ENCODE measurements at regions of chr21 and their contacts with region 1.

Region 1: GRCh38 chr21:41460578-41461527 is 34.8 kb downstream of the MX1 start:
- DNase-seq: peak; percentile 65
- H3K4me3 ChIP-seq: no peak overlapping the region
- H3K27ac ChIP-seq: no peak overlapping the region
- H3K4me1 ChIP-seq: no peaks in the 10 kb centered on the region
- H3K27me3 ChIP-seq: no peaks in the 10 kb centered on the region
- CTCF ChIP-seq: peak; percentile 71 to 81 (median 74)
- POLR2A ChIP-seq: no peak

Region 2: GRCh38 chr21:41283211-41283818 is 177.5 kb before region 1 on chr21:
- intact Hi-C with region 1: loop called (anchors 10 kb)
- DNase-seq: peak; percentile 39 to 49
- H3K4me3 ChIP-seq: no peak overlapping the region
- H3K27ac ChIP-seq: no peak overlapping the region
- H3K4me1 ChIP-seq: no peaks in the 10 kb centered on the region
- H3K27me3 ChIP-seq: no peaks in the 10 kb centered on the region
- CTCF ChIP-seq: peak; percentile 58 to 73 (median 70)
- POLR2A ChIP-seq: no peak

Region 3: DNA sequence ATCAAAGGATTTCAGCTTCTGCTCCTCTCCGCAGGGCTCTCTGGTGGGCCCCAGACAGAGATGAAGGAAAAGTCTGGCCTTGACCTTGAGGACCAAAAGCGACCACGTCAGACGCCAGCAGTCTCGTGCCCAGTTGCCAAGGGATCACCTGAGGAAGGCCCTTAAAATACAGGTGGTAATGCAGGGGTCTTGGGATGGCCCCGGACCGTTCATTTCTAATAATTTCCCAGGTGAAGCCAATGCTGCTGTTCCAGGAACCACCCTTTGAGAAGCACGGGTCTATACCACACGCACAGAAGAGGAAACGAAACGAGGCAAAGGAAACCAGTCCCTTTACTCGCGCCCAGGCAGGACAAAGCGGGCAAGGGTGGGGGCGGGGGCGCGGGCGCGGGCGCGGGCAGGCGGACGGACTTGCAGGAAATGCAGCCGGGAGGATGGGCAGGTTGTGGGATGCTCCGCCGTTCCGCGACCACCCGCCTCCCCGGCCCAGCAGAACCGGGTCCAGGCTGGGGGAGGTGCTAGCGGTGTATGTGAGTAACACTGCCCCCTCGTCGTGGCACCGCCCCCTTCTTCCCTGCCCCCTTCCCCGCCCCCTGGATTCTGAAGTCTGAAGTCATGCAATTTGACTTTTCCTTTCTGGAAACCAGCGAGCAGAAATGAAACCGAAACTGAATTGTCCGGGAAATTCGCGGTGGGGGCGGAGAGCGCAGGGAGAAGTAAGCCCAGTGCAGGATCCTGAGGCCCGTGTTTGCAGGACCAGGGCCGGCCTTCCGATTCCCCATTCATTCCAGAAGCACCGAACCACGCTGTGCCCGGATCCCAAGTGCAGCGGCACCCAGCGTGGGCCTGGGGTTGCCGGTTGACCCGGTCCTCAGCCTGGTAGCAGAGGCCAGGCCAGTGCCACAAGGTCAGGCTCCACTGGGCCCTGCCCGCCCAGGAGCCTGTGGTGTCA is 40.7 kb before region 1 on chr21:
- intact Hi-C with region 1: no loop called
- DNase-seq: peak; percentile 89 to 91
- H3K4me3 ChIP-seq: peak overlapping the region; percentile 57 to 80
- H3K27ac ChIP-seq: peak overlapping the region; percentile 89 to 98
- H3K4me1 ChIP-seq: no peaks in the 10 kb centered on the region
- H3K27me3 ChIP-seq: no peaks in the 10 kb centered on the region
- CTCF ChIP-seq: no peak
- POLR2A ChIP-seq: peak in 1 of 2 donors; percentile 34